Heart right ventricle (tissue), 16 donors: ENCODE measurements at regions of chr10 and their contacts with region 1.

Region 1: GRCh38 chr10:6088721-6089390 is at the start of gene RBM17:
- DNase-seq: peak; percentile 95 to 96
- ATAC-seq: peak; percentile 85 to 97 (median 92)
- H3K4me3 ChIP-seq: peak within 1 kb of the TSS; percentile 67 to 95 (median 88)
- H3K27ac ChIP-seq: peak within 1 kb of the TSS; percentile 81 to 97 (median 94)
- H3K4me1 ChIP-seq: peaks cover 8 to 70% (median 59%) of the 10 kb centered on the region in 9 donors
- H3K27me3 ChIP-seq: peaks cover 0 to 3% (median 0%) of the 10 kb centered on the region in 7 donors
- CTCF ChIP-seq: peak; percentile 99 to 100 (median 100)
- total RNA-seq, gene RBM17: 53.4 to 93.2 (median 64.0) TPM

Region 2: GRCh38 chr10:5948999-5949759 is 139.7 kb before region 1 on chr10:
- intact Hi-C with region 1: loop called in 5 of 10 experiments (anchors 5 to 10 kb)
- DNase-seq: peak; percentile 54 to 67
- ATAC-seq: peak in 6 of 8 donors; percentile 23 to 50 (median 40)
- H3K4me3 ChIP-seq: no peak overlapping the region
- H3K27ac ChIP-seq: peak overlapping the region in 2 of 10 donors; percentile 7 to 31
- H3K4me1 ChIP-seq: peaks cover 12 to 63% (median 36%) of the 10 kb centered on the region in 9 donors
- H3K27me3 ChIP-seq: no peaks in the 10 kb centered on the region
- CTCF ChIP-seq: peak; percentile 11 to 68 (median 52)

Region 3: GRCh38 chr10:6014241-6014761 is 74.6 kb before region 1 on chr10:
- intact Hi-C with region 1: loop called in 7 of 10 experiments (anchors 1 to 5 kb)
- DNase-seq: peak in 1 of 2 donors; percentile 75
- ATAC-seq: peak in 7 of 8 donors; percentile 23 to 63 (median 55)
- H3K4me3 ChIP-seq: peak overlapping the region in 1 of 10 donors; percentile 33
- H3K27ac ChIP-seq: peak overlapping the region in 2 of 10 donors; percentile 11 to 48
- H3K4me1 ChIP-seq: peaks cover 0 to 21% (median 8%) of the 10 kb centered on the region in 9 donors
- H3K27me3 ChIP-seq: no peaks in the 10 kb centered on the region
- CTCF ChIP-seq: peak; percentile 52 to 88 (median 79)

Region 4: GRCh38 chr10:6144406-6145165 is 55.7 kb after region 1 on chr10:
- intact Hi-C with region 1: loop called in 1 of 10 experiments (anchors 5 kb)
- DNase-seq: peak; percentile 91 to 92
- ATAC-seq: peak; percentile 92 to 96 (median 94)
- H3K4me3 ChIP-seq: peak overlapping the region; percentile 61 to 94 (median 82)
- H3K27ac ChIP-seq: peak overlapping the region; percentile 30 to 98 (median 86)
- H3K4me1 ChIP-seq: peaks cover 0 to 82% (median 16%) of the 10 kb centered on the region in 9 donors
- H3K27me3 ChIP-seq: peaks cover 0 to 14% (median 0%) of the 10 kb centered on the region in 7 donors
- CTCF ChIP-seq: peak in 3 of 9 donors; percentile 30 to 40 (median 35)

Region 5: GRCh38 chr10:6401562-6402348 is 312.9 kb after region 1 on chr10:
- intact Hi-C with region 1: loop called in 5 of 10 experiments (anchors 1 to 5 kb)
- DNase-seq: peak; percentile 48 to 80
- ATAC-seq: peak; percentile 90 to 97 (median 96)
- H3K4me3 ChIP-seq: peak overlapping the region in 8 of 10 donors; percentile 23 to 54 (median 41)
- H3K27ac ChIP-seq: peak overlapping the region in 7 of 10 donors; percentile 21 to 87 (median 38)
- H3K4me1 ChIP-seq: peaks cover 0 to 48% (median 8%) of the 10 kb centered on the region in 9 donors
- H3K27me3 ChIP-seq: peaks cover 0 to 7% (median 0%) of the 10 kb centered on the region in 7 donors
- CTCF ChIP-seq: peak; percentile 57 to 83 (median 76)